Activated CD4-positive, alpha-beta memory T cell treated with anti-CD3 and anti-CD28 coated beads, Interleukin-2, amount 10 ng/mL, durations not matched to agents 7 days and 5 days (primary cell): ENCODE measurements at regions of chr7 and their contacts with region 1.

Region 1: GRCh38 chr7:140653319-140654108 is 12.9 kb upstream of the DENND2A start:
- DNase-seq: peak; percentile 30
- H3K4me3 Mint-ChIP-seq: no peak overlapping the region
- H3K27ac Mint-ChIP-seq: no peak overlapping the region
- H3K4me1 Mint-ChIP-seq: peaks cover 14% of the 10 kb centered on the region
- H3K27me3 Mint-ChIP-seq: peaks cover 18% of the 10 kb centered on the region

Region 2: GRCh38 chr7:140517546-140518369 is 135.8 kb before region 1 on chr7:
- CTCF ChIA-PET with region 1: interaction called, 19 read pairs
- POLR2A ChIA-PET with region 1: no interaction called
- DNase-seq: peak; percentile 70
- H3K4me3 Mint-ChIP-seq: no peak overlapping the region
- H3K27ac Mint-ChIP-seq: no peak overlapping the region
- H3K4me1 Mint-ChIP-seq: peaks cover 4% of the 10 kb centered on the region
- H3K27me3 Mint-ChIP-seq: peaks cover 10% of the 10 kb centered on the region

Region 3: GRCh38 chr7:140621401-140622021 is 32.0 kb before region 1 on chr7:
- CTCF ChIA-PET with region 1: no interaction called
- POLR2A ChIA-PET with region 1: no interaction called
- DNase-seq: no peak
- H3K4me3 Mint-ChIP-seq: no peak overlapping the region
- H3K27ac Mint-ChIP-seq: no peak overlapping the region
- H3K4me1 Mint-ChIP-seq: peaks cover 2% of the 10 kb centered on the region
- H3K27me3 Mint-ChIP-seq: peaks cover 7% of the 10 kb centered on the region